Psoas muscle (tissue), 8 donors: ENCODE measurements at regions of chr16 and their contacts with region 1.

Region 1: DNA sequence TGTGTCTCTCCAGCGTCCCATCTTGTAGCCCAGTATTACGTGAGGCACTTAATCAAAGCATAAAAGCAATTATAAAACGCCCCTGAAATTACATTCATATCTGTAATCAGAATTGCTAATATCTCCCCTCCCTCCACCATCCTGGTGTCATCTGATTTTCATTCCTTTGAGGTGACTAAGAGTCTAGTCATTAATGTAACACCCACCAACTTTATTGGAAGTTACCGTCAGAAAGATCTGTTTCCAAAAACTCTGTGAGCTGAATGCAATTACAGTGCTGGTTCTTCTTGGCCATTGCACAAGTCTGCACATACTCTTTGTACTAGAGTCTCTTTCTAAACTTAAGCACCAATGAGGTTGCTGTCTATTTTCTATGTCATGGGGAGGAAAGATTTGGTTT is 12.5 kb upstream of the MAF start:
- DNase-seq: no peak
- ATAC-seq: no peak
- H3K4me3 ChIP-seq: no peak overlapping the region
- H3K27ac ChIP-seq: no peak overlapping the region
- H3K4me1 ChIP-seq: no peaks in the 10 kb centered on the region
- H3K27me3 ChIP-seq: no peaks in the 10 kb centered on the region
- CTCF ChIP-seq: no peak

Region 2: GRCh38 chr16:80466024-80466987 is 853.3 kb after region 1 on chr16:
- intact Hi-C with region 1: loop called in 1 of 2 experiments (anchors 5 kb)
- DNase-seq: peak; percentile 45 to 62
- ATAC-seq: peak in 2 of 4 donors; percentile 48 to 69
- H3K4me3 ChIP-seq: no peak overlapping the region
- H3K27ac ChIP-seq: no peak overlapping the region
- H3K4me1 ChIP-seq: no peaks in the 10 kb centered on the region
- H3K27me3 ChIP-seq: no peaks in the 10 kb centered on the region
- CTCF ChIP-seq: peak; percentile 51